Pancreas (tissue), 10 donors: ENCODE measurements at regions of chr4 and their contacts with region 1.

Region 1: GRCh38 chr4:140609548-140610425 is 41.0 kb upstream of the UCP1 start:
- DNase-seq: peak in 2 of 6 donors; percentile 14 to 36
- ATAC-seq: peak; percentile 61 to 92 (median 90)
- H3K4me3 ChIP-seq: no peak overlapping the region
- H3K27ac ChIP-seq: no peak overlapping the region
- H3K4me1 ChIP-seq: no peaks in the 10 kb centered on the region
- H3K27me3 ChIP-seq: peaks cover 0 to 4% (median 0%) of the 10 kb centered on the region in 4 donors
- CTCF ChIP-seq: peak in 3 of 4 donors; percentile 11 to 36 (median 19)

Region 2: DNA sequence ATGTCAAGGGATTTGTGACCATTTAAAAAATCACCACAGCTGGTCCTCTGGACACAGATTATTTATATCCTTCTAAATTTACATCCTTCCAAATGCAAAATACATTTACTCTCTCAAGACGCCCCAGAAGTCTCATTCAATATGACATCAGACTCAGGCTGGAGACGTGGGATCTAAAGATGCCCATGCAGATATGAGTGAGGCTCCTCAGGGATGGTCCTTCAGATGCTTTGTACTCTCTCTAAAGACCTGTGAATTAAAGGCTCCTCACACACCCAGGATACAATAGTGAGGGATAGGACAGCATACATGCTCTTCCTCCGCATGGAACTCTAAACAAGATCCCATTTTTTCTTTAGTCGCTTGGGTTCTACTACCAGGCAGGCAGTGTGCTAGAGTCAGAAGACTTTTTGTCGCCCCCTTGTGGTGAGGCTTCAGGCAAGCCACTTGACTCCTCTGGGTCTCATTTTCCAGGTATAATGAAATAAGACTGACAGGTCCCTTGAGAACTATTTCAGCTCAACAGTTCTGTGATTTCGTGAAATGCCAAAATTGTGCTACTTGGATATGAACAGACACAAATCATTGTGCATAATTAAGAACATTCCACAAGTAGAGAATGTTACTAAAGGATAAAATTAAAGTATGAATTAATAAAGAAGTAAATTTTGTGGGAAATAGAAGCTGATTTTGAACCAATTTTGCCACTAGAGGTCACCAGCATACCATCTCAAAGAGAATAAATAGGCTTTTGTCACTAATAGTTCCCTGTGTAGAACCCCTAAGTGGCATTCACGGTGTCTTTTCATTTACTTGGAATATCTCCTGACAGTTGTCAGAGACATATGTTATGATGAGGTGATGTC is 250.0 kb before region 1 on chr4:
- intact Hi-C with region 1: loop called in 1 of 3 experiments (anchors 10 kb)
- DNase-seq: peak in 5 of 6 donors; percentile 56 to 85 (median 79)
- ATAC-seq: peak; percentile 94 to 98 (median 96)
- H3K4me3 ChIP-seq: no peak overlapping the region
- H3K27ac ChIP-seq: no peak overlapping the region
- H3K4me1 ChIP-seq: peaks cover 0 to 3% (median 0%) of the 10 kb centered on the region in 3 donors
- H3K27me3 ChIP-seq: no peaks in the 10 kb centered on the region
- CTCF ChIP-seq: peak; percentile 60 to 88 (median 76)